GM12878 (cell line): ENCODE measurements at regions of chr14 and their contacts with region 1.

Region 1: DNA sequence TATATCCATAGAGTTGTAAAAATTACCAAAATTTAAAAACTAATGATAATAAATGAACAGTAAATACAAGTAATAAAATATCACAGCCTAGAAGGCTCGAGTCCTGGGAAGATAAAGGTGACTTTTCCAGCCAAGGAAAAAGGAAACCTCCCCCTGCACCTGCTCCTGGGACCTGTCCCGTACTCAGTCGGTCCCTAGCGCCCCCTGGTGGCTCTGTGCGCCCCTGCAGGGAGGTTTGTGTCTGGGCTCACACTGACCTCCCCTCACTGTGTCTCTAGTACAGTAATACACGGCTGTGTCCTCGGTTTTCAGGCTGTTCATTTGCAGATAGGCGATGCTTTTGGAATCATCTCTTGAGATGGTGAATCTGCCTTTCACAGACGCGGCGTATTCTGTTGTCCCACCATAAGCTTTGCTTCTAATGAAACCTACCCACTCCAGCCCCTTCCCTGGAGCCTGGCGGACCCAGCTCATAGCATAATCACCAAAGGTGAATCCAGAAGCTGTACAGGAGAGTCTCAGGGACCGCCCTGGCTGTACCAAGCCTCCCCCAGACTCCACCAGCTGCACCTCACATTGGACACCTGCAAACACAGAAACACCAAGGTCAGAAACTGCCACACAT is 1030.4 kb downstream of the TMEM121 start:
- DNase-seq: no peak
- ATAC-seq: peak; percentile 89
- H3K4me3 ChIP-seq: no peak overlapping the region
- H3K27ac ChIP-seq: no peak overlapping the region
- H3K4me1 ChIP-seq: no peaks in the 10 kb centered on the region
- H3K27me3 ChIP-seq: no peaks in the 10 kb centered on the region
- CTCF ChIP-seq: peak; percentile 71 to 94 (median 93)
- EP300 ChIP-seq: no peak
- POLR2A ChIP-seq: no peak
- RAD21 ChIP-seq: peak; percentile 73

Region 2: DNA sequence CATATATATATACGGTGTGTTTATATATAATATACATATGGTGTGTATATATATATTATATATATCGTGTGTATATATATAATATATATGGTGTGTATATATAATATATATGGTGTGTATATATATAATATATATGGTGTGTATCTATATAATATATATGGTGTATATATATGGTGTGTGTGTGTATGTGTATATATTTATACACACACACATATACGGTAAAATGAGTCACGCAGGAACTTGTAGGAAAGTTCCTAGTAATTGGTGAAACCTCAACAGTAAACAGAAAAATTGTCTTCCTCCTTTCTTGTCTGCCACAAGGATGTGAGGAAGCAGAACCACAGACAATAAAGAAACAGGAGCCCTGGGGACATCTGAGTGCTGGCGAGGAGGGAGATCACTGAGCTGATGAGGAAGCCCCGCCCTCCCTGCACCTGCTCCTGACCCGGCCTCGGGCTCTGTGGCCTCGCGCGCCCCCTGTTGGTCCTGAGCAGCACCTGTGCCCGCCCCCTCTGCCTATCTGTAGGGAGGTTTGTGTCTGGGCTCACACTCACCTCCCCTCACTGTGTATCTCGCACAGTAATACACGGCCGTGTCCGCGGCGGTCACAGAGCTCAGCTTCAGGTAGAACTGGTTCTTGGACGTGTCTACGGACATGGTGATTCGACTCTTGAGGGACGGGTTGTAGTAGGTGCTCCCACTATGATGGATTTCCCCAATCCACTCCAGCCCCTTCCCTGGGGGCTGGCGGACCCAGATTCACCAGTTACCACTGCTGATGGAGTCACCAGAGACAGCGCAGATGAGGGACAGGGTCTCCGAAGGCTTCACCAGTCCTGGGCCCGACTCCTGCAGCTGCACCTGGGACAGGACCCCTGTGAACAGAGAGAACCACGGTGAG is 49.0 kb after region 1 on chr14:
- CTCF ChIA-PET with region 1: interaction called, 23 read pairs
- POLR2A ChIA-PET with region 1: no interaction called
- RAD21 ChIA-PET with region 1: no interaction called
- SMC1A ChIA-PET with region 1: no interaction called
- in situ Hi-C with region 1: no loop called
- intact Hi-C with region 1: no loop called
- DNase-seq: peak; percentile 21
- ATAC-seq: peak; percentile 100
- H3K4me3 ChIP-seq: no peak overlapping the region
- H3K27ac ChIP-seq: no peak overlapping the region
- H3K4me1 ChIP-seq: no peaks in the 10 kb centered on the region
- H3K27me3 ChIP-seq: peaks cover 0 to 3% of the 10 kb centered on the region in 2 experiments; a peak in 1 of 4 replicates
- CTCF ChIP-seq: peak; percentile 69 to 91 (median 85)
- EP300 ChIP-seq: no peak
- POLR2A ChIP-seq: no peak
- RAD21 ChIP-seq: peak; percentile 55